Common myeloid progenitor, CD34-positive (primary cell): ENCODE measurements at regions of chr15 and their contacts with region 1.

Region 1: DNA sequence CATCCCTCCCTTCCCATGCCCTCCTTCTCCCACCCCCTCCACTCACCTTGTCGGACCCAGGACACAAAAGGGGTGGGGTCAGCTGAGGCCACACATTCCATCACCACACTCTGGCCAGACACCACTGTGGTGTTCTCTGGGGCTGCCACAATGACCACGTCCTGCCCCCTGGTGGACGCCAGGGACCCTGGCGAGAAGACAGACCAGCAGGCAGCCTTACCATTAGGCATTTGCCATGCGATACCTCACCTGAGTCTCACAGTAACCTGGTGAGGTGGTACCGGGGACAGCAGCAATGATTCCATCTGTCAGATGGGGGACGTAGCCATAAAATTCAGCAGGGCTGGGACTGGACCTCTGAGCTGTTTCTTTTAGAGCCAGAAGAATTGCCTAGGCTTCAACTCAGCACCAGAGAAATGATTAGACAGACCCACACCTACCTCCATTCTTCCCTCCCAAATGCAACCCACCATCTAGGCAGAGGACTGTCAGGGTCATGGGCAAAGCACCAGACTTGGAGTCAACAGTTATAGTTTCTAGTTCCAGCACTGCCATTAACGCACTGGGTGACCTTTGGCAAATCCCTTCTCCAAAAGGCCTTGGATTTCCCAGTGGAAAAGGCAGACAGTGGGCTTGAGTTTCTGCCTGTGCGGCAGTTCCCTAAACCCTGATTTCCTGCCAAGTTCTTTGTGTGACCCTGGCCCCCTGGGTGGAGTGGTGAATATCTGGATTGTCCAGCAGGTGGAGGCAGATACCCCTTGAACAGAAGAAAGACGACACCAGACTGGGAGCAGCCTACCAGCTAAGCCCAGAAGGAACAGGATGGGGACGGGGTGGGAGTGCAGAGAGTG is 21.8 kb downstream of the IGDCC4 start:
- DNase-seq: peak; percentile 80 to 89 (median 83)
- H3K4me3 ChIP-seq: no peak overlapping the region
- H3K27ac ChIP-seq: no peak overlapping the region
- H3K4me1 ChIP-seq: peaks cover 0 to 14% (median 11%) of the 10 kb centered on the region in 4 experiments
- H3K27me3 ChIP-seq: peaks cover 6 to 42% (median 16%) of the 10 kb centered on the region in 5 experiments

Region 2: DNA sequence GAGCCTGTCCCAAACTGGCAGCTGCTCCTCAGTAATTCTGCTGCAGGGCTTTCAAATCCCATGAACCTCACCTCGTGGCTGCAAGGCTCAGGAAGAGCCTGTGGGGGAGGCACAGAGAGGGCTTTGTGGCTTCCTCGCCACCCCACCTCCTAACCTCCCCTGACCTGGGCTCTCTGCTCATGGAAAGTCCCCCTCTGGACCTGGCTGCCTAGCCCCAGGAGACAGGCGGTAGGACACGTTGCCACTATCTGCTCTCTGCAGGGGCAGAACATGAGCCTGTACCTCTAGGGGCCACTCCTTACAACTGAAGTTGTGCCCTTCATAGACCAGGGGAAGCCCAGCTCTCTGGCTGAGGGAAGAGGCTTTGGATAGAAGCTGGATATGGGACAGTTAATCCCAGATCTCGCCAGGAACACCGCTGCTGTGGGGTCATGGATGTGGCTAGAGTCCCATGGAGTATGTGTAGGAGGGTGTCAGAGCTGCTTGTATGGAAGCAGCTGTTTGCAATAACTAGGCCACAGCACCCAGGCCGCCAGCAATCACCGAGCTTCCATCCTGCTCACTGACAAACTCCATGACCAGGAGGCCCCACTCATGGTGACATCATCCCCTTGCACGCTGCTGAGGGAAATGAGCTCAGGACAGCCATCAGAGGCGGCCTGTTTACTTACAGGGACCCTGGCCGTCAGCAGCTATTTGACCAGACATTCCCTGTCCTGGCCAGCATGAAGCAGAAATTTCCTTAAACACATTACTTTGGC is 155.7 kb before region 1 on chr15:
- CTCF ChIA-PET with region 1: no interaction called
- POLR2A ChIA-PET with region 1: no interaction called
- DNase-seq: no peak
- H3K4me3 ChIP-seq: no peak overlapping the region
- H3K27ac ChIP-seq: no peak overlapping the region
- H3K4me1 ChIP-seq: peaks cover 0 to 6% (median 4%) of the 10 kb centered on the region in 4 experiments
- H3K27me3 ChIP-seq: no peaks in the 10 kb centered on the region

Region 3: GRCh38 chr15:65318870-65319356 is 82.1 kb before region 1 on chr15:
- CTCF ChIA-PET with region 1: interaction called, 28 read pairs
- POLR2A ChIA-PET with region 1: no interaction called
- DNase-seq: peak; percentile 74 to 91 (median 86)
- H3K4me3 ChIP-seq: no peak overlapping the region
- H3K27ac ChIP-seq: no peak overlapping the region
- H3K4me1 ChIP-seq: peaks cover 0 to 10% (median 3%) of the 10 kb centered on the region in 4 experiments
- H3K27me3 ChIP-seq: peaks cover 0 to 5% (median 0%) of the 10 kb centered on the region in 5 experiments

Region 4: DNA sequence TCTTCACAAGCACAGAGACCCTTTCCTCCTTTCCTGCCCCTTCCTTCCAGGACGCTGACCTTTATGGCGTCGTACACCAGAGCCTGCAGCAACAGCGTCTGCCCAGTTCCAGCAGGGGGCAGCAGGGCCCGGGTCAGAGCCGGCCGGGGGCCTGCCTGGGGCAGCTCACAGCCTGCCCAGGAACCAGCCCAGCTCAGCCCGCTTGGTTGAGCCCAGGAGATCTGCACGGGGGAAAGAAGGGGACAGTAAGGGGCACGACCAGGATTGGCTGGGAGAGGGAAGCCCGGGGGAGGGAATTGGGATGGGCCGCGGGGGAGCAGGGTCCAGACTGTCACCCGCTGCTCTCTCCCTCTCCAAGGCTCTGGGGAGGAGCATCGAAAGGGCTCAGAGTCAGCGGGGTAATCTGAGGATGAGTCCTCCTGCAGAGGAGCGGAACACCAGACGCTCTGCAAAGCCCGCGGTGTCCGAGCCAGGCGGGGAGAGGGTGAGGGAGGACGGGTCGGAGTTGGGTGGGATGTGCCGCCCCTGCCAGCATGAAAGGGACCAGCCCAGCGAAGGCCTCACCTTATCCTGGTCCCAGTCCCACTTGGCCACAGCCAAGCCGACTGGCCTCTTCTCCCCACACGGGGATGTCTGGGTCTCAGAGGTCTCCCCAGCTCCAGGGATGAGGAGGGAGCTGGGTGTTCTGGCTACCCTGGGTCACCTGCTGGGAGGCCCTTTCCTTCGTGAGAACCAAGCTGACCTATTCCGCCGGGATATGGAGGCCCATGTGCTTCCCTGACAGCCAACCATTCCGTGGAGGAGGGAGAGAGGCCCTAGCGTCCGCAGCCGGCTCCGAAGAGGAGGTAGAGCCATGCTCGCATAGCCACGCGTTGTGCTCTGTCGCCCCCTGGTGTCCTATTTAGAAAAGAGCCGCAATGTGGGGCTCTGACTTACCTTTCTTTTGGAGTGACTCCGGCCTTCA is 15.8 kb before region 1 on chr15:
- CTCF ChIA-PET with region 1: interaction called, 11 read pairs
- POLR2A ChIA-PET with region 1: no interaction called
- DNase-seq: peak; percentile 75 to 87 (median 81)
- H3K4me3 ChIP-seq: peak overlapping the region; percentile 10 to 74 (median 44)
- H3K27ac ChIP-seq: no peak overlapping the region
- H3K4me1 ChIP-seq: peaks cover 0 to 12% (median 11%) of the 10 kb centered on the region in 4 experiments
- H3K27me3 ChIP-seq: peaks cover 0 to 37% (median 24%) of the 10 kb centered on the region in 5 experiments

Region 5: GRCh38 chr15:65414841-65415621 is 14.0 kb after region 1 on chr15:
- CTCF ChIA-PET with region 1: interaction called, 23 read pairs
- POLR2A ChIA-PET with region 1: interaction called, 3 read pairs
- DNase-seq: no peak
- H3K4me3 ChIP-seq: no peak overlapping the region
- H3K27ac ChIP-seq: no peak overlapping the region
- H3K4me1 ChIP-seq: no peaks in the 10 kb centered on the region
- H3K27me3 ChIP-seq: peaks cover 2 to 35% (median 12%) of the 10 kb centered on the region in 5 experiments

Region 6: GRCh38 chr15:65434201-65434600 is 33.2 kb after region 1 on chr15:
- CTCF ChIA-PET with region 1: interaction called, 10 read pairs
- POLR2A ChIA-PET with region 1: no interaction called
- DNase-seq: no peak
- H3K4me3 ChIP-seq: no peak overlapping the region
- H3K27ac ChIP-seq: no peak overlapping the region
- H3K4me1 ChIP-seq: no peaks in the 10 kb centered on the region
- H3K27me3 ChIP-seq: no peaks in the 10 kb centered on the region

Region 7: DNA sequence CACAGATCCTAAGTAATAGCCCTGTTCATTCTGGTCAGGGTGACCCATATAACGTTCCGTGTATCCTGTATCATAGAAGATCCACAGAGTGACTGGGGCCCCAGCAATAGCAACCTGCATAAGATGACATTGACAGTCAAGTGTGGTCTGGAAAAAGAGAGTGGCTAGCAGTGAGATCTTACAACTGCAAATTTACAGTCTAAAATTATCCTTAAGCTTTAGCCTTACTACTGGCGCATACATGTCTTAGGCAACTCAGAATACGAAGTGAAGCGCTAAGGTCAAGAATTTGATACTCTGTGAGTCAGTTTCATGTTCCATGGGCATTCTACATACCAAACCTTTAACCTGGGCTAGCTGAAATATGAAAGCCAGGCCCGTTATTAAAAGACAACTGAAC is 51.0 kb after region 1 on chr15:
- CTCF ChIA-PET with region 1: interaction called, 10 read pairs
- POLR2A ChIA-PET with region 1: no interaction called
- DNase-seq: no peak
- H3K4me3 ChIP-seq: no peak overlapping the region
- H3K27ac ChIP-seq: no peak overlapping the region
- H3K4me1 ChIP-seq: no peaks in the 10 kb centered on the region
- H3K27me3 ChIP-seq: no peaks in the 10 kb centered on the region